ENCODE measurements at regions of chr12 and their contacts with region 1.

Region 1: DNA sequence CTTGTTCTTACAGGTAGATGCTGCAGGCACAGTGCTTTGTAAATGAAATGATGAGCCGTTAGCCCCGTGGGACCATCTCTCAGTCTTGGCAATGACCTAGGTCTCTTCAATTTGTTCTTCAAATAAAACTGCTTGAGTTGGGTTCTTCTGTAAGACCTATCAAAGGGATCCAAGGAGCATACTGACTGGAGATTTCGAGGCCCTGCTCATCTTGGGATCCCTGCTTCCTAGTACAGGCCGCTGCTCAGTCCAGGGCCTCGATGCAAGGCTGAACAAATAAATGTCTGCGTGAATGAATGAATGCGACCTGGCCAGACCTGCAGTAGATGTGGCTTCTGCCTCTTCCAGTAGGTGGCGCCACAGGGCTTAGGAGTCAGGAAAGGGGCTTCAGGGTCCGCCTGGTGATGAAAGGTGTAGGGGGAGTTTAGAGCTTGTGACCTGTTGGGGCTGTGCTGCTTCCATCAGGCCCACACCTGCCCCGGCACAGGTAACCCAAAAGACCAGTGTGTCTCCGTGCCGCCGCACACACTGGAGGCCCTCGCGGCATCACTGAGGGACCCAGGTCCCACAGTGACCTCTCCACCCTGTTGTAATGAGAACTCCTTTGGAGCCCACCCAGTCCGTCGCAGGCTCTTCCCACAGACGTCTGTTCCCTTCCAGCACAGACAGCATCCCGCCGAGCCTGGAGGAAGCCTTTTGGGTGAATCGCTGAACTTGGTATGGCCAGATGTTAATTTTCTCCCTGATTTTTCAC is 4.4 kb downstream of the CACNA1C start:
- DNase-seq: peak; percentile 89

Region 2: GRCh38 chr12:2013527-2014223 is 43.5 kb before region 1 on chr12:
- intact Hi-C with region 1: no loop called
- DNase-seq: no peak

Region 3: GRCh38 chr12:2129076-2129475 is 71.9 kb after region 1 on chr12:
- intact Hi-C with region 1: no loop called
- DNase-seq: peak; percentile 6

Region 4: GRCh38 chr12:2163172-2163941 is 106.1 kb after region 1 on chr12:
- intact Hi-C with region 1: loop called in 1 of 2 experiments (anchors 5 kb)
- DNase-seq: peak; percentile 96

Region 5: GRCh38 chr12:2267703-2268501 is 210.7 kb after region 1 on chr12:
- intact Hi-C with region 1: loop called (anchors 5 to 10 kb)
- DNase-seq: peak; percentile 84

Region 6: DNA sequence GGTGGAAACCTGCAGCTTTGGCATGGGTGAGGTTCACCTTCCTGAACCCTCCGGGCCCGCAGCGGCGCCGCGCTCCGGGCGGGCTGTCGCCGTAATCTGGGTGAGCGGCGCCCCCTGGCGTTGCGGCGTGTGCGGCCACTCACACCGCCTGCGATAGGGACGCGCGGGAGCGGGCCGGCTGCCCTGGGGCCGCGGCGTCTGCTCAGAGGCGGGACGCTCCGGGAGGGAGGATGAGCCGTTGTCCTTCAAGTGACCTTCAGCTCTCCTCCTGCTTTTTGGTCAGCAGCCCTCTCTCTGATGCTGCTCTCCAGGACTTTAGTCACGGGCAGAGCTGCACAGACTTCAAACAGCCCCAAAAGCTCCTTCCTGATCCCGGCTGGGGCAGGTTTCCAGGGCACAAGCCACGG is 525.9 kb after region 1 on chr12:
- intact Hi-C with region 1: loop called in 1 of 2 experiments (anchors 5 kb)
- DNase-seq: peak; percentile 91

Region 7: DNA sequence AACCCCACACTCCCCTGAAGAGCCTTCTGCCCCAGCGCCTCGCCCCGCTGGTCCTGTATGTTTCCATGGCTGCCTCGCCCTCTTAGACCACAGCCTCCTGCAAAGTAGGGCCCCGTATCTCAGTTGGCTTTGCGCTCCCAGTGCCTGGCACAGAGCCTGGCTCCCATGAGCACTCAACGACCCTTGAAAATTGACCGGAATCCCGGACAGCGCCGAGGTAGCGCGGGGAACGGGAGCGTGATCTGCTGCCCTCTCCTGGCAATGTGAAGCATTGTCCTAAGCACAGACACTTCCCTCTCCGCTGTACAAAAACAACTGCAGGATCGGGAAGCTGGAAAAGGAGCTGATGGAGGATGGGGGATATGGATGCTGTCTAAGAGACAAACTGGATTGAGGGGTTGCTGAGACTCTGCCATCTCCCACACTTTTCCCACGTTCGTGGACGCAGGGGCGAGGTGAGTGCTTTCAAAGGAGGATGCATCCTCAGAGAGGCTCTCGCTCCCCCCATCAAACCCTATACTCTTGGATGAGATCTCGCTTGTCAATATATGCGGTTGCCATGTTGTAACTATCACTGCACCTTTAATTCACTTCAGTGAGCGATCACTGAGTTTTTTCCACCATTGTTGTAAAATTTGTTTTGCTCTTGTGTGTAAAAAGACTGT is 726.9 kb after region 1 on chr12:
- intact Hi-C with region 1: no loop called
- DNase-seq: peak; percentile 86